Activated CD4-positive, alpha-beta memory T cell treated with anti-CD3 and anti-CD28 coated beads, Interleukin-2, amount 10 ng/mL, durations not matched to agents 7 days and 5 days (primary cell): ENCODE measurements at regions of chr18 and their contacts with region 1.

Region 1: GRCh38 chr18:58661423-58661822 is 9.8 kb upstream of the MALT1 start:
- DNase-seq: no peak
- H3K4me3 Mint-ChIP-seq: no peak overlapping the region
- H3K27ac Mint-ChIP-seq: no peak overlapping the region
- H3K4me1 Mint-ChIP-seq: peaks cover 43% of the 10 kb centered on the region
- H3K27me3 Mint-ChIP-seq: peaks cover 3% of the 10 kb centered on the region

Region 2: DNA sequence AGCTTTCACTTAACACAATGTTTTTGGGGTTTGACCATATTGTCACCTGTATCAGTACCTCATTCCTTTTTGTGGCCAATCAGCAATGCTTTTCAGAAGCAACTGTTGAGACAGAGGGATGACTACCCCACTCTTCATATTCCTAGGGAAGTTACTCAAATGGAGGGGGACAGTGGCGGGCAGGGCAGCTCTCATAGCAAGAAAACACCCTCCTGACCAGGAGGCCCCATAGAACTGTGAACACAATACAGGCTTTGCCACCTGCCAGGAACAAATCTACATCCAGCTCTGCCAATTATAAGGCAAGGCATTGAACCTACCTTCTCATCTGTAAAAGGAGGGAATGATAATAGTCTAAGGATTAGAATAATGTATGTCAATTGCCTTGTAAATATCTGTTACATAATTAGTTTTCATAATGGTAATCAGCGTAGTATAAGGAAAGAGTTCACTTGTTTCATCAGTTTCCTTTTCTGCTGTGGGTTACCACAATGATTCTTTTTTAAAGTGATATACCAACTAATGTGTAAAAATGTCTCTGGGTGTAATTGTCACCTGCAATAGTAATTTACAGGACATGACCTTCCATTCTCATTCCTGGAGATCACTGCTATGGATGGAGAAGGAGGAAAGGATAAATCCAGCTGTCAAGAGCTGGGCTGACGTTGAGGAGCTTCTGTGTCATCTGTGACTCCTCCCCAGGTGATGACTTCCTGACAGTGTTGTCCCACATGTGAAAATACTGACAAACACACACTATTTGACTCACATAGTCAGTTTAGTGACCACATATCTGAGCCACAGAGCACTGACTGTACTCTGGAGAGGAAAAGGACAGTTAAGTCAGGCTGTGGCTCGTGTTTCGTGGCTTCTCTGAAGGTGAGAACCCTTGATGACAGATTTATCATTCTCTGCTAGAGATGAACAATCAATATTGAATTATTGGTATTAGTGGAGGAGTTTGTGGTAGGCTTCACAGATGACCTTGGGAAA is 46.0 kb before region 1 on chr18:
- CTCF ChIA-PET with region 1: no interaction called
- POLR2A ChIA-PET with region 1: interaction called, 14 read pairs
- DNase-seq: peak; percentile 80
- H3K4me3 Mint-ChIP-seq: peak overlapping the region; percentile 54
- H3K27ac Mint-ChIP-seq: peak overlapping the region; percentile 85
- H3K4me1 Mint-ChIP-seq: peaks cover 28% of the 10 kb centered on the region
- H3K27me3 Mint-ChIP-seq: peaks cover 9% of the 10 kb centered on the region